ENCODE measurements at regions of chr16 and their contacts with region 1.

Region 1: GRCh38 chr16:24499193-24499814 is 40.1 kb upstream of the RBBP6 start:
- DNase-seq: no peak
- H3K4me3 ChIP-seq: no peak overlapping the region
- H3K27me3 ChIP-seq: no peaks in the 10 kb centered on the region; the same call in 1 of the 2 replicates
- CTCF ChIP-seq: peak; percentile 38

Region 2: DNA sequence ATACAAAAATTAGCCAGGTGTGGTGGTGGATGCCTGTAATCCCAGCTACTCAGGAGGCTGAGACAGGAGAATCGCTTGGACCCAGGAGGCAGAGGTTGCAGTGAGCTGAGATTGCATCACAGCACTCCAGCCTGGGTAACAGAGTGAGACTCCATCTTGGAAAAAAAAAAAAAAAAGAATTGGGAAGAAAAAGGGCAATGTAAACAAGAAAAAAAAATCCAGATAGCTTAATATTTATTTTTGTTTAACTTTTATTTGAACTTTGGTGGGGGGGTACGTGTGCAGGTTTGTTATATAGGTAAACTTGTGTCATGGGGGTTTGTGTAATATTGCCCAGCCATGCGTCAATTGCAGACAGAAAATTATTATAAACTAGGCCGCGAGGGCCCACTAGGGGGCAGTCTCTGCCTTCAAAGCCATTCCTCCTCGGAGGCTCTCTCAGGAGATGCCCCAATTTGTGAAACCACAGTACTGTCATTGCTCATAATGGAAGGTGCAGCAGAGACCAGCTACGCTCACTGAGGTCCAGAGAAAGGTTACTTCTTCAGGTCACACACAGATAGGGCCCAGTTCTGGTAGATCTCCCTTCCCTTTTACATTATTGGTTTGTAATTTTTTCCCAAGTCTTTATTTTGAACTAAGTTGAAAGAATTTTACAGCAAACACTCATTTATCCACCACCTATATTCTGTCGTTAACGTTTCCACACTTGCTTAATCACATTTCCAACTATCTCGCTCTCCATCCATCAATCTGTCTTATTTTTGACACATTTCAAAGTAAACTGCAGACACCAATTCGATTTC is 457.3 kb before region 1 on chr16:
- CTCF ChIA-PET with region 1: interaction called, 74 read pairs
- POLR2A ChIA-PET with region 1: no interaction called
- DNase-seq: no peak
- H3K4me3 ChIP-seq: no peak overlapping the region
- H3K27me3 ChIP-seq: no peaks in the 10 kb centered on the region
- CTCF ChIP-seq: peak; percentile 82

Region 3: GRCh38 chr16:24810951-24811843 is 311.9 kb after region 1 on chr16:
- CTCF ChIA-PET with region 1: no interaction called
- POLR2A ChIA-PET with region 1: no interaction called
- DNase-seq: no peak
- H3K4me3 ChIP-seq: no peak overlapping the region
- H3K27me3 ChIP-seq: no peaks in the 10 kb centered on the region
- CTCF ChIP-seq: no peak